B cell (primary cell): ENCODE measurements at regions of chr14 and their contacts with region 1.

Region 1: GRCh38 chr14:93939304-93940229 is 12.4 kb downstream of the FAM181A start:
- DNase-seq: peak; percentile 93
- ATAC-seq: peak; percentile 95
- H3K4me3 ChIP-seq: peak overlapping the region in 4 of 5 experiments; percentile 28 to 50 (median 47)
- H3K4me3 Mint-ChIP-seq: peak overlapping the region; percentile 78
- H3K27ac ChIP-seq: no peak overlapping the region
- H3K27ac Mint-ChIP-seq: no peak overlapping the region
- H3K4me1 ChIP-seq: peaks cover 5 to 11% of the 10 kb centered on the region in 2 donors
- H3K4me1 Mint-ChIP-seq: peaks cover 14% of the 10 kb centered on the region
- H3K27me3 ChIP-seq: peaks cover 0 to 11% (median 2%) of the 10 kb centered on the region in 4 experiments
- H3K27me3 Mint-ChIP-seq: peaks cover 10% of the 10 kb centered on the region
- CTCF ChIP-seq: peak; percentile 99

Region 2: DNA sequence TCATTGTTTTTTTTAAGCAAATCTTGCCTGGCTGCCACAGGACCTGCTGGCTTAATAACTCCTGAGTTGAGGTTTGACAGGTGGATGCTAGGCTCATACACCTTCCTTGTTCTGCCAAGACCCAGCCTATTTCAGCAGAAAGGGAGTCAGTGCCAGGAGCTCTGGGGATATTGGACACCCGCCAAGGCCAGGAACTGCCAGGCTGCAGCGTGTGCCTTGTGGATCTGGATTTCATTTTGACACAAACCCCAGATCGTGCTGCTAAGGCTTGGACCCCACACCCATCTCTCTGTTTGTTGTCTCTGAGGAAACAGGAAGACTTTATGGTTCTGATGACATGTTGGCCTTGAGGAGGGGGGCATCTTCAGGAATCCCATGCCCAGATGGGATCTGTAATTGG is 106.9 kb before region 1 on chr14:
- CTCF ChIA-PET with region 1: no interaction called
- POLR2A ChIA-PET with region 1: no interaction called
- intact Hi-C with region 1: no loop called
- DNase-seq: no peak
- ATAC-seq: no peak
- H3K4me3 ChIP-seq: no peak overlapping the region
- H3K4me3 Mint-ChIP-seq: no peak overlapping the region
- H3K27ac ChIP-seq: no peak overlapping the region
- H3K27ac Mint-ChIP-seq: no peak overlapping the region
- H3K4me1 ChIP-seq: no peaks in the 10 kb centered on the region
- H3K4me1 Mint-ChIP-seq: no peaks in the 10 kb centered on the region
- H3K27me3 ChIP-seq: peaks cover 0 to 2% (median 0%) of the 10 kb centered on the region in 4 experiments
- H3K27me3 Mint-ChIP-seq: peaks cover 27% of the 10 kb centered on the region
- CTCF ChIP-seq: no peak

Region 3: DNA sequence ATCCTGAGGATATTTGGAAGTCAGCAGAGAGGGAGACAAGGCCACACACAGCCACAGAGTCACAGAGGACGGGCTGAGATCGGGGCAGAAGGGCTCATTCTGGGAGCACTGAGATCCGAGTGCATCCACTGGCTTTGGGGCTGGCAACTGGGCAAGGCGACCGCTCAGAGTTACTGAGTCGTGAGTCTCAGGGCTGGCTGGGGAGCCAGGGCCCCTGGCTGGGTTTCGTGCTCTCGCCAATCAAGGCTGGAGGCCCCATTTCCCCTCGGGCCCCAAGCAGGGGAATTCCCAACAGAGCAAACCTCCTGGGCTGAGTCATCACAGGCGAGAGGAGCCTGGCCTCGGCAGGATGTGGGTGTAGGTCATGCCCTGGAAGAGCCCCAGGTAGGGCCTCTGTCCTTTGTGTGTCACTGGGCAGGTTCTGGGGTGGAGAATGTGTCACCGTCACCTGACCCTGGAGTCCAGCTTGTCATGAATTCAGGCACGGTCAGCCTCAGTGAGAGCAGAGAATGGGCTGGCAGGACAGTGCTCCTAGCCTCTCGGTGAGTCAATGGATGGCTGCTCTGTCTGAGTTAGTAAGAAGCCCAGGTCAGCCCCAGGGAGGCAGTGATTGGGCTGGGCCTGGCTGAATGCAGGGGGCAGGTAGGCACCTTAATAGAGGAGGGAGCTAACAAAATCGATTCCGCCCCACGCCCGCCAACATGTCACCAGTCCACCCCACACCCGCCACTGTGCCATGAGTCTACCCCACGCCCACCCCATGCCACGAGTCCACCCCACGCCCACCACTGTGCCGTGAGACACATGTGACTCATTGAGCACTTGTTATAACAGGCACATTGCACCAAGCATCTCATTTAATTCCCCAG is 19.9 kb after region 1 on chr14:
- CTCF ChIA-PET with region 1: interaction called, 1,036 read pairs
- POLR2A ChIA-PET with region 1: interaction called, 10 read pairs
- intact Hi-C with region 1: loop called (anchors 2 kb)
- DNase-seq: peak; percentile 92
- ATAC-seq: peak; percentile 71
- H3K4me3 ChIP-seq: peak overlapping the region in 1 of 5 experiments; percentile 19
- H3K4me3 Mint-ChIP-seq: peak overlapping the region; percentile 78
- H3K27ac ChIP-seq: peak overlapping the region; percentile 68 to 75
- H3K27ac Mint-ChIP-seq: peak overlapping the region; percentile 95
- H3K4me1 ChIP-seq: peaks cover 96 to 97% of the 10 kb centered on the region in 2 donors
- H3K4me1 Mint-ChIP-seq: peaks cover 92% of the 10 kb centered on the region
- H3K27me3 ChIP-seq: no peaks in the 10 kb centered on the region
- H3K27me3 Mint-ChIP-seq: no peaks in the 10 kb centered on the region
- CTCF ChIP-seq: no peak

Region 4: DNA sequence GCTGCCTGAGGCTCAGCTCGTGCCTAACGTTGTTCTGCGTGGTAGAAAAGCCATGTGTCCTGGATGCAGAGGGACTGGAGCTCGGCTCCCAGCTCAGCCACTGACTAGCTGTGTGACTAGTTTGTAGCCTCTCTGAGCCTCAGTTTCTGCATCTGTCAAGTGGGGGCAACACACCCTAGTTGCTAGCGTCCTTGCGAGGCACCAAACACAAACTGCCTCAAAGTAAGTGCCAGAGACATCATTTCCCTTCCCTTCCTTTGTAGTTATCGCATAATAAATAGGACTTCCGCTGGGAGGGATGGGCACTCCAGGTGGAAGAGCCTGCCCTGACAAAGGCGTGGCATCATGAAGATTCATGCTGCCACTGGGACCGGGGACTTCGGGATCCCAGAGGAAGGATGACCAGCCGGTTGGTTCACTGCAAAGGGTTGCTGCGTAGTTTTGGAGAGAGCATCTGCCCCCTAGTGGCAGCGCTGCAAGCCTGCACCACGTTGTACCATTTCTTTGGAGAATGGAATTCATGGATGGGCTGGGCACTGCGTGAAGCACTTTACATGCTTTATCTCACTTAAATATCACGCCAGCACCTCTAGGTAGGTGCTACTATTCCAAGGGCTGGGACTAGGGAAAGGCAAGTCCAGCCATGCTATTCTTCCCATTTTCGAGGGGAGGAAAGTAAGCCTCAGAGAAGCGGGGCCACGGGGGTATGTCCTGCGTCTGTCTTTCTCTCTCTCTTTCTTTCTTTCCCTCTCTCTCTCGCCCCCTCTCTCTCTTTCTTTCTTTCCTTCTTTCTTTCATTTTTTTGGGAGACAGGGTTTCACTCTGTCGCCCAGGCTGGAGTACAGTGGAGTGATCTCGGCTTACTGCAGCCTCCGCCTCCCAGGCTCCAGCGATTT is 62.2 kb after region 1 on chr14:
- CTCF ChIA-PET with region 1: interaction called, 367 read pairs
- POLR2A ChIA-PET with region 1: interaction called, 3 read pairs
- intact Hi-C with region 1: loop called (anchors 1 kb)
- DNase-seq: peak; percentile 79
- ATAC-seq: peak; percentile 85
- H3K4me3 ChIP-seq: no peak overlapping the region
- H3K4me3 Mint-ChIP-seq: no peak overlapping the region
- H3K27ac ChIP-seq: no peak overlapping the region
- H3K27ac Mint-ChIP-seq: peak overlapping the region; percentile 20
- H3K4me1 ChIP-seq: peaks cover 4 to 6% of the 10 kb centered on the region in 2 donors
- H3K4me1 Mint-ChIP-seq: peaks cover 4% of the 10 kb centered on the region
- H3K27me3 ChIP-seq: peaks cover 0 to 28% (median 9%) of the 10 kb centered on the region in 4 experiments
- H3K27me3 Mint-ChIP-seq: peaks cover 48% of the 10 kb centered on the region
- CTCF ChIP-seq: peak; percentile 99

Region 5: DNA sequence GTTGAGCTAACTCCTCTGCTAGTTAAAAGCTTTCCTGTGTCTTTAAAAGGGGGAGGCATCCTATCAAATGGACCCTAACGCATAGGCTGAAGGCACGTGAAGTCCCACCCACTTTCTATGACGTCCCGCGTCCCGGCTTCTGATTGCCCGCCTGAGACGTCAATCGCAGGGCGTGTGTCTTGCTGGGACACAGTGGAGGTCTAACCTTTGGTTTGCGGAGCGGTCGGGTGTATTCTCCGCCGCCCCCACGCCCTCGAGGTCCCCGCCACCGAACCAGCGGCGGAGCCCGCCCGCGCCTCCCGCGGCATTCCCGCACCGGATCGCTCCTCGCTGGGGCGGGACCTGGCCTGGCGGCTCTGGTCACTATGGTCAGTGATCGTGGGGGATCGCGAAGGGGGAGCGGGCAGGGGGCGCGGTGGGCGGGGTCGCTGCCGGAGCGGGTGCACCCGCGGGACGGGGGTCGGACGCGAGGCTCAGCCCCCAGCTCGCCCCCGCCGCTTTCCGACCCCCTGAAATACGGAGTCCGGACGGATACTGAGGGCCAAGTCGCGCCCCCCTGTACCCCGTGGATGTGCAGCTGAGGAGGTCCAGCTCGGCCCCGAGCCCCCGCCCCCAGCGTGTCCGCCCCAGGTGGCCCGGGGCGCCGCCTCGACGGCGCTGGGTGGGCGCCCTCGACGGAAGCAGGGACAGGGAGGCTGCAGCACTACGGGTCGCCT is 86.8 kb after region 1 on chr14 and contains the start of gene OTUB2:
- CTCF ChIA-PET with region 1: interaction called, 10 read pairs
- POLR2A ChIA-PET with region 1: no interaction called
- intact Hi-C with region 1: no loop called
- DNase-seq: peak; percentile 98
- ATAC-seq: peak; percentile 100
- H3K4me3 ChIP-seq: peak within 1 kb of the TSS in 4 of 5 experiments; percentile 38 to 64 (median 58)
- H3K4me3 Mint-ChIP-seq: peak within 1 kb of the TSS; percentile 90
- H3K27ac ChIP-seq: no peak within 1 kb of the TSS
- H3K27ac Mint-ChIP-seq: peak within 1 kb of the TSS; percentile 70
- H3K4me1 ChIP-seq: peaks cover 9% of the 10 kb centered on the region in 2 donors
- H3K4me1 Mint-ChIP-seq: peaks cover 8% of the 10 kb centered on the region
- H3K27me3 ChIP-seq: peaks cover 0 to 22% (median 9%) of the 10 kb centered on the region in 4 experiments
- H3K27me3 Mint-ChIP-seq: peaks cover 22% of the 10 kb centered on the region
- CTCF ChIP-seq: no peak
- total RNA-seq, gene OTUB2: 0.17 and 0.19 TPM in 2 replicates

Region 6: DNA sequence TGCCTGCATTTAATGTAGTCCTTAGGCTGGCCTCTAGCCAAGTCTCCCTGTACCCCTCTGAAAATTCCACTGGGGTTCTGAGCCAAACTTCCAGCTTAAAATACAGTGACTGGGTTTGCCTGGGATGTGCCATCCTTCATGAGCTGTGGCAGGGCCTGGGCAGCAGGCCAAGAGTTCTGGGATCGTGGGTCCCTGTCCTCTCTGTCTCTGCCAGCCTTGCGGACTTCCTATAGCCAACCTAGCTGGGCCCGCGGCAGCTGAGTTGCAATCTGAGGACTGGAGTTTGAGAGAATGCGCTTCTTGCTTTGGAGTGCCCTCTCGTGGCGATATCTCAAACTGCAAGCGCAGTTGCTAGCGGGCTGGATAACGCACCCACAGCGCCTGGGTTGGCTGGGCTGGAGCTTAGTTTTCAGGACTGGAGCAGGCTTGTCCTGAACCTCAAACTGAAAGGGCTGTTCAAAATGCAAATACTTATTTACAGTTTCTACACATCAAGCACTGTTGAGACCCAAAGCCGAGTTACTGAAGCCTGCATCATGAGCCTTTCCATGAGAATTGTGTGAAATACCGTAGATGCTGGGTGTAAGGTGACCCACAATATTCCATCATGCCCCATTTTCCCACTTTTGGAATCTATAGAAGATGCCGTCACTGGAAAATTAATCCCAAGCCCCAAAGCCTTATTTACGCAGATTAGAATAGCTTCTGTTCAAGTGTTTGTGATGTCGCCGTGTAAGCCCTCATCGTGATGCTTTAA is 197.2 kb after region 1 on chr14:
- CTCF ChIA-PET with region 1: interaction called, 21 read pairs
- POLR2A ChIA-PET with region 1: no interaction called
- intact Hi-C with region 1: loop called (anchors 1 kb)
- DNase-seq: peak; percentile 83
- ATAC-seq: peak; percentile 91
- H3K4me3 ChIP-seq: no peak overlapping the region
- H3K4me3 Mint-ChIP-seq: no peak overlapping the region
- H3K27ac ChIP-seq: no peak overlapping the region
- H3K27ac Mint-ChIP-seq: no peak overlapping the region
- H3K4me1 ChIP-seq: peaks cover 0 to 3% of the 10 kb centered on the region in 2 donors
- H3K4me1 Mint-ChIP-seq: peaks cover 2% of the 10 kb centered on the region
- H3K27me3 ChIP-seq: peaks cover 0 to 10% (median 1%) of the 10 kb centered on the region in 4 experiments
- H3K27me3 Mint-ChIP-seq: peaks cover 27% of the 10 kb centered on the region
- CTCF ChIP-seq: peak; percentile 94

Region 7: DNA sequence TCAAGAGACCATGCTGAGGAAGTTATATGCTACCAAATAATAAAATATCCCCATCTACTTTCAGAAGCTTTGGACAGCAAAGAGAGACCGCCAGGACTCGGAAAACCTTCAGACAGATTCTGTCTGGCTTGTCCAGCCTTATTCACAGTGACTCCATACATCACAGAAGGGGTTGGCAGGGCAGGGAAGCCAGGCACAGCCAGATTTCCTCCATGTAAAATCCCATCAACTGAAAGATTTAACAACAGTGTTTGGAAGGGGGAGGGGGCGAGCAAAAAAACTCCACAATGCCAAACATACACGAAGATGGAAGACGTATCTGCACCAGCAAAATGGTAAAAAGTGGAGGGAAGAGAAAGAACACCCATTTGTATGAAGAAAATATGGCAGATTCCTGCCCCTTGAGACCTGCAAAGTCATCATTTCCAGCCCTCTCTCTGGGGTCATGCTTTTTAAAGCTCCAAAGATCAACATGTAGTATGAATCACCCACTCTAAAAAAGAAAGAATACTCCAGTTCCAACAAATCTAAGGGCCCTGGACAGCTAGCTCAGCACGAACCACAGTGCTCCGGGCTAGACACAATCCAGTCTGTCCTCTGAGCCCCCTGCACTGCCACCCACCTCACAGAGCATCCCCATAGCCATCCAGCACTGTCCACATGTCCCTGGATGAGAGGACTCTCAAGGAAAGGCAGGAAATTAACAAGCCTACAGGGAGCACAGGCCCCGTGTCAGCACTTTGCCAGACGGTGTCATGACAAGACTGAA is 1101.3 kb after region 1 on chr14:
- CTCF ChIA-PET with region 1: no interaction called
- POLR2A ChIA-PET with region 1: no interaction called
- intact Hi-C with region 1: no loop called
- DNase-seq: no peak
- ATAC-seq: no peak
- H3K4me3 ChIP-seq: no peak overlapping the region
- H3K4me3 Mint-ChIP-seq: no peak overlapping the region
- H3K27ac ChIP-seq: no peak overlapping the region
- H3K27ac Mint-ChIP-seq: no peak overlapping the region
- H3K4me1 ChIP-seq: no peaks in the 10 kb centered on the region
- H3K4me1 Mint-ChIP-seq: no peaks in the 10 kb centered on the region
- H3K27me3 ChIP-seq: peaks cover 0 to 3% (median 0%) of the 10 kb centered on the region in 4 experiments
- H3K27me3 Mint-ChIP-seq: peaks cover 38% of the 10 kb centered on the region
- CTCF ChIP-seq: no peak